Tibial artery (tissue), 4 donors: ENCODE measurements at regions of chr10 and their contacts with region 1.

Region 1: DNA sequence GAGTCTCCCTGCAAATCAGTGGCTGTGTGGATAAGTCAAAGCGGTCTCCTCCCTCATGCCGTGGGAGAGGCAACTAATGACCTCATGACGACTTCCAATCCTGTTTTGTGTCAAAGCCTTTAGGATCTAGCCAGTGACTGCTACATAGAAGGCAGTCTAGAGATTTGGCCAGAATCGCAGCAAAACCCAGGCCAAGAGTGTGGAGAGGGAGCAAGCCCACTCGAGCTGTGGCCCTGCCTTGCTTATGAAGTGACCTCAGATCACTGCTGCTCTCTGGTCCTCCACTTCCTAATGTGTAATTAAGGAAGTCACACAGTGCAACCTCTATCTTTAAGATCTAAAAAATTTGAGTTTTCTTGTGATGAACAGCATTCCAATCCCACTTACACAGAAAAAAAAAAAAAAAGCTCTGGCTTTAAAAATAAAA is 296.7 kb upstream of the KLF6 start:
- DNase-seq: peak in 1 of 2 donors; percentile 62
- H3K4me3 ChIP-seq: no peak overlapping the region
- H3K27ac ChIP-seq: peak overlapping the region; percentile 37 to 61
- H3K4me1 ChIP-seq: peaks cover 0 to 43% (median 22%) of the 10 kb centered on the region in 4 donors
- H3K27me3 ChIP-seq: no peaks in the 10 kb centered on the region
- CTCF ChIP-seq: no peak

Region 2: DNA sequence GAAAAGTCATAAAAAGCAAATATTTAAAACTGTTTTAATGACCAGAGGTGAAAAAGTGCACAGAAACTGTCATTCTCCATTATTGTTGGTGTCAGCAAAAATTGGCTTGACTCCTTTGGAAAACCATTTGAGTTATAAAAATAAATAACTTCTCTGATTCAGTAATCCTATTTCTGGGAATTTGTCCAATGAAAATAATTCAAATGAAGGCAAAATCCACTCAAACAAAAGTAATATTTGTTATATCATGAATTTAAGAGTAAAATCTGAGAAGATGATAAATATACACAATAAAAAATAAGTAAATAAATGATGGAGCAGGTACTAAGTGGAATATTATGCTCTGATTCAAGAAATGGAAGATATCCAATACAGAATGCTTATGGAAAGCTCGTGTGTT is 29.9 kb after region 1 on chr10:
- intact Hi-C with region 1: no loop called
- DNase-seq: no peak
- H3K4me3 ChIP-seq: no peak overlapping the region
- H3K27ac ChIP-seq: no peak overlapping the region
- H3K4me1 ChIP-seq: peaks cover 0 to 13% (median 0%) of the 10 kb centered on the region in 4 donors
- H3K27me3 ChIP-seq: no peaks in the 10 kb centered on the region
- CTCF ChIP-seq: no peak

Region 3: GRCh38 chr10:4498711-4499251 is 417.1 kb after region 1 on chr10:
- intact Hi-C with region 1: loop called (anchors 10 kb)
- DNase-seq: no peak
- H3K4me3 ChIP-seq: no peak overlapping the region
- H3K27ac ChIP-seq: peak overlapping the region; percentile 80 to 85
- H3K4me1 ChIP-seq: peaks cover 0 to 30% (median 12%) of the 10 kb centered on the region in 4 donors
- H3K27me3 ChIP-seq: no peaks in the 10 kb centered on the region
- CTCF ChIP-seq: no peak